ENCODE measurements at regions of chr2 and their contacts with region 1.

Region 1: GRCh38 chr2:113041871-113042508 is 10.7 kb downstream of the IL36B start:
- DNase-seq: peak in 1 of 9 experiments; percentile 8
- ATAC-seq: no peak
- H3K4me3 ChIP-seq: no peak overlapping the region
- H3K4me3 Mint-ChIP-seq: no peak overlapping the region
- H3K27ac ChIP-seq: no peak overlapping the region
- H3K27ac Mint-ChIP-seq: no peak overlapping the region
- H3K4me1 ChIP-seq: no peaks in the 10 kb centered on the region
- H3K4me1 Mint-ChIP-seq: no peaks in the 10 kb centered on the region
- H3K27me3 ChIP-seq: no peaks in the 10 kb centered on the region
- H3K27me3 Mint-ChIP-seq: no peaks in the 10 kb centered on the region
- CTCF ChIP-seq: no peak

Region 2: DNA sequence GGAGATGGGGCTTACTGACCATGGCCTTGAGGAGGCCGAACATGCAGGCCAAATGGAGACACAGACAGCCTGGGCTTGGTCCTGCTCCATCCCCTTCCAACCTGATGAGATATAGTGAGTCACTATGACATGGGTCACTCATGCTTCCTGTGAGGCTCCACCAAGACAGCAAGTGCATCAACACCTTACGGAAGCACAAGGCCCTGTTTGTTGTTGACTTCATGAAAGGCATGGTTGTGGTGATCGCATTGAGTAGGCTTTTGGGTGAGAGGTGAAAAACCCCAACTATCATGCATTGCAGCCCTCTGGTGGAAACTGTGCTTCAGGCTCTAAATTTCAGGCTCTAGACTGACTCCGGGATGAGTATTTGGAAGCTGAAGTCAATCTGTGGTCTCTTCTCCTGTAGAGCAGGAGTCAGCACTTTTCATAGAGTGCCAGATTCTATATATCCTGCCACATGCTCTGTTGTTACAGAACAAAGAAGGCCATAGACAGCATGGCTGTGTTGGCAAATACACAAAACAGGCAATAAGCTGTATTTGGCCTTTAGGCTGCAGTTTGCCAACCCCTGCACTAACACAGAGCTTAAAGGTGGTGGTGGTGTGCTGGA is 121.0 kb before region 1 on chr2:
- CTCF ChIA-PET with region 1: no interaction called
- POLR2A ChIA-PET with region 1: no interaction called
- intact Hi-C with region 1: no loop called
- DNase-seq: peak in 5 of 9 experiments; percentile 4 to 86 (median 49)
- ATAC-seq: peak; percentile 86
- H3K4me3 ChIP-seq: no peak overlapping the region
- H3K4me3 Mint-ChIP-seq: no peak overlapping the region
- H3K27ac ChIP-seq: peak overlapping the region in 1 of 2 experiments; percentile 52
- H3K27ac Mint-ChIP-seq: peak overlapping the region; percentile 88
- H3K4me1 ChIP-seq: peaks cover 4% of the 10 kb centered on the region
- H3K4me1 Mint-ChIP-seq: peaks cover 12% of the 10 kb centered on the region
- H3K27me3 ChIP-seq: no peaks in the 10 kb centered on the region
- H3K27me3 Mint-ChIP-seq: no peaks in the 10 kb centered on the region
- CTCF ChIP-seq: no peak

Region 3: GRCh38 chr2:113064281-113064680 is 22.3 kb after region 1 on chr2:
- CTCF ChIA-PET with region 1: no interaction called
- POLR2A ChIA-PET with region 1: no interaction called
- intact Hi-C with region 1: loop called in 1 of 2 experiments (anchors 1 kb)
- DNase-seq: no peak
- ATAC-seq: no peak
- H3K4me3 ChIP-seq: no peak overlapping the region
- H3K4me3 Mint-ChIP-seq: no peak overlapping the region
- H3K27ac ChIP-seq: no peak overlapping the region
- H3K27ac Mint-ChIP-seq: no peak overlapping the region
- H3K4me1 ChIP-seq: no peaks in the 10 kb centered on the region
- H3K4me1 Mint-ChIP-seq: no peaks in the 10 kb centered on the region
- H3K27me3 ChIP-seq: no peaks in the 10 kb centered on the region
- H3K27me3 Mint-ChIP-seq: peaks cover 3% of the 10 kb centered on the region
- CTCF ChIP-seq: no peak

Region 4: GRCh38 chr2:114031605-114032505 is 989.9 kb after region 1 on chr2:
- CTCF ChIA-PET with region 1: no interaction called
- POLR2A ChIA-PET with region 1: no interaction called
- intact Hi-C with region 1: no loop called
- DNase-seq: no peak
- ATAC-seq: no peak
- H3K4me3 ChIP-seq: no peak overlapping the region
- H3K4me3 Mint-ChIP-seq: no peak overlapping the region
- H3K27ac ChIP-seq: no peak overlapping the region
- H3K27ac Mint-ChIP-seq: no peak overlapping the region
- H3K4me1 ChIP-seq: no peaks in the 10 kb centered on the region
- H3K4me1 Mint-ChIP-seq: no peaks in the 10 kb centered on the region
- H3K27me3 ChIP-seq: peaks cover 0 to 3% of the 10 kb centered on the region in 2 experiments
- H3K27me3 Mint-ChIP-seq: peaks cover 16% of the 10 kb centered on the region
- CTCF ChIP-seq: no peak